MCF 10A (cell line): ENCODE measurements at regions of chr15 and their contacts with region 1.

Region 1: GRCh38 chr15:95025924-95026728 is 794.8 kb downstream of the MCTP2 start:
- DNase-seq: peak; percentile 73
- H3K4me3 Mint-ChIP-seq: no peak overlapping the region
- H3K27ac Mint-ChIP-seq: no peak overlapping the region
- H3K4me1 Mint-ChIP-seq: no peaks in the 10 kb centered on the region
- H3K27me3 Mint-ChIP-seq: no peaks in the 10 kb centered on the region
- CTCF ChIP-seq: peak; percentile 78

Region 2: DNA sequence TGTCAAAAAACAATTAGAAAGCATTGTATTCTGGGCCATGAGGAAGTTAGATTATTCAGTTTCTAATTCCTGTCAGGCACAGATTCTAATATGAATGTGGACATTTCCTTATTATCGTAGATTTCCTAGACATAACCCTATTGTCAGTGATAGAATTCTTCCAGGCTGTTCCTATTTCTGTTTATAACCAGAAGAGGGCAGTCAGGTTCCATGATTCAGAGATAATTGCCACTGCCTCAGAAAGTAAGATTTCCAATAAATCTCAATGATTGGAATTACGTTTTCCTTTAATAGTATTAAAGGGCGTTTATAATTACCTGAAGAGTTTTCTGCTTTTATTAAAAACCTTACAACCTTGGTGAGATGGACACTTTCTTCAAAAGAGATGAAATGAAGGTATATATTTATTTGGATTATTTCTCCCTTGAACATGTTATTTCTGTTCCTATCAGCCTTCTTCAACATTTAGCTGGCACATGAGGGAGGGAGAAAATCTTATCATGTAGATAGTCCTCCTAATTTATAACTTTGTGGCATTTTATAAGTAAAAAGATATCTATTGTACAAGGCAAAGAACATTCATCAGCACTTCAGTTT is 355.6 kb before region 1 on chr15:
- CTCF ChIA-PET with region 1: interaction called, 21 read pairs
- POLR2A ChIA-PET with region 1: interaction called, 5 read pairs
- intact Hi-C with region 1: no loop called
- DNase-seq: peak; percentile 64
- H3K4me3 Mint-ChIP-seq: no peak overlapping the region
- H3K27ac Mint-ChIP-seq: no peak overlapping the region
- H3K4me1 Mint-ChIP-seq: peaks cover 13% of the 10 kb centered on the region
- H3K27me3 Mint-ChIP-seq: no peaks in the 10 kb centered on the region
- CTCF ChIP-seq: peak; percentile 66

Region 3: DNA sequence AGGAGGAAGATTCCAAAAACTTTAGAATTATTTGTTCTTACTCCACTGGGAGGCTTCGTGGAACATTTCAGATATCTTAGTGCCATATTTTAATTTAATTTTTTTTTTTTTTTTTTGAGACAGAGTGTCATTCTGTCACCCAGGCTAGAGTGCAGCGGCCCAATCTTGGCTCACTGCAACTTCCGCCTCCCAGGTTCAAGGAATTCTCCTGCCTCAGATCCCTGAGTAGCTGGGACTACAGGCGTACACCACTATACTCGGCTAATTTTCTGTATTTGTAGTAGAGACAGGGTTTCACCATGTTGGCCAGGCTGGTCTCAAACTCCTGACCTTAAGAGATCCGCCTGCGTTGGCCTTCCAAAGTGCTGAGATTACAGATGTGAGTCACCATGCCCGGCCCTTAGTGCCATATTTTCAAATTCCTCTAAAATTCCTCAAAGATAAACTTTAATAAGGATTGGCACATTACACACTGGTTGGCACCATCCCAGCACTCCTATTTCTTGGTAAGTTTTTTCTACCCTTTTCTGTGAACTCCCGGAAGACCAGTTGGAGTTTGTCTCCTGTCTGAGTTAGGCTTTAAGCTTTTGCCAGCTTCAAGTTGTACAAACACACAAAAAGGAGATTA is 101.0 kb before region 1 on chr15:
- CTCF ChIA-PET with region 1: no interaction called
- POLR2A ChIA-PET with region 1: no interaction called
- intact Hi-C with region 1: no loop called
- DNase-seq: no peak
- H3K4me3 Mint-ChIP-seq: no peak overlapping the region
- H3K27ac Mint-ChIP-seq: no peak overlapping the region
- H3K4me1 Mint-ChIP-seq: no peaks in the 10 kb centered on the region
- H3K27me3 Mint-ChIP-seq: no peaks in the 10 kb centered on the region
- CTCF ChIP-seq: no peak

Region 4: DNA sequence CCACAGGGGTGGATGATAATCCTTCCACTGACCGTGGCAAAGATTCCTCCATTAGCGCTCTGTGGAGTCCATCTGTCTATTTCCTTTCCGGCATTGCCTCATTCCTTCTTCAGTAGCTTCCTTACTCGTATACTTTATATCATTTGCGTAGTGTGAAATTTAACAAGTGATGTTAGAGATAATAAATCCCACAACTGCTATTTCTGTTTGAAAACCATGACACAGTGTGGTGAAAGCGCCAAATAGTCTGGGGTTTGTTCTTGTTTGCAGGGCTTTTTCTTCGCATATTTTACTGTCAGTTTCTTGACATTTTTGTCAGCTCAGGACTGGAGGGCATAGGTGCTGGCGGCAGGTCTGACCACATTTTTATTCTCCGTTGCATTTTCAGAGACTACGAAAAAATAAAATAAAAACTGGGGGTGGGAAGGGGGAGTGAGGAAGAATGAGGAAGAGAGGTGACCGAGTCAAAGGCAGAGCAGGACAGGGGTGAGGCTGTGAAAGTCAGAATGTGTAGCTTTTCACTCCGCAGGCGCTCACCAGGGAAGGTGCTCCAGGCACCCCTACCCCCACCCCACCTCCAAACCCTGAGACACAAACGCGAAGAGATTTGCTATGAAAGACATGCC is 170.2 kb after region 1 on chr15:
- CTCF ChIA-PET with region 1: interaction called, 4 read pairs
- POLR2A ChIA-PET with region 1: no interaction called
- intact Hi-C with region 1: loop called (anchors 5 kb)
- DNase-seq: peak; percentile 17
- H3K4me3 Mint-ChIP-seq: peak overlapping the region; percentile 74
- H3K27ac Mint-ChIP-seq: peak overlapping the region; percentile 84
- H3K4me1 Mint-ChIP-seq: peaks cover 13% of the 10 kb centered on the region
- H3K27me3 Mint-ChIP-seq: no peaks in the 10 kb centered on the region
- CTCF ChIP-seq: no peak

Region 5: DNA sequence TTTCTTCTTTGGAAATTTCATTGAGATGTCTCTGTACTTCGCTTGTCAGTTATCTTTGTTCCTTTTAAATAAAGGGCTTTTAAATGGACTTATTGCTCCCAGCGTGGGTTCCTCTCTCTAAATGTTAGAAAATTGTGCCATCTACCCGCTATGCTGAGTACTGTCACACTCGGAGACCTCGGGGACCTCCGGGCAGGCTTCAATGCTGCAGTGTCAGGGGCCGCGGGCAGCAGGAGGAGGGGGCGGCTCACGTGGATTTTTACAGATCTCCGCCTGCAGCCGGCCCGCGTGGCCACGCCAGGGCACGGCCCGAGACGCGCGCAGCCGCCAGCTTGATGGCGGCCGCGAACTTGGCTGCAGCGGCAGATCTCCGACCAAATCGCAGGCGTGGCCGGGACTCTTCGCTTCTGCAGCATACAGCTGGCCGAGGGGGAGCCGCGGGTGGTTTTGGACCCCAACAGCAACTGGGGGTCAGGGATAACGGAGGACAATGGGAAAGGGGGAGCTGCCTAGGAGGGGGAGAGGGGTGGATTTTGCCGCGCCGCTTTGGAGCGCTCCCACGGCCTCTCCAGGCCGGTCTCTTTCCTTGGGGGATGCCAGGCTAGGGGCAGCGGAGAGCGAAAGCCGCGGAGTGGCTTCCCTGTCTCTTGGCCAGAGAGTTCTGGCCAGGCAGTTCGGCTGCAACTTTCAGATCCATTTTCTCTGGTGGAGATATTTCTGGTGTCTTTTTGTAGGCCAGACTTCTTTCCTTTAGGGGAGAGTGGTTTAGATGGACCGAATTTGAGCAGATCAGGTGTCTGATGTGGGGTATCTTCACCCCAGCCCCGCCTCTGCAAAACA is 1319.7 kb after region 1 on chr15:
- CTCF ChIA-PET with region 1: no interaction called
- POLR2A ChIA-PET with region 1: no interaction called
- intact Hi-C with region 1: loop called (anchors 5 kb)
- DNase-seq: peak; percentile 23
- H3K4me3 Mint-ChIP-seq: no peak overlapping the region
- H3K27ac Mint-ChIP-seq: no peak overlapping the region
- H3K4me1 Mint-ChIP-seq: peaks cover 9% of the 10 kb centered on the region
- H3K27me3 Mint-ChIP-seq: no peaks in the 10 kb centered on the region
- CTCF ChIP-seq: peak; percentile 48

Region 6: DNA sequence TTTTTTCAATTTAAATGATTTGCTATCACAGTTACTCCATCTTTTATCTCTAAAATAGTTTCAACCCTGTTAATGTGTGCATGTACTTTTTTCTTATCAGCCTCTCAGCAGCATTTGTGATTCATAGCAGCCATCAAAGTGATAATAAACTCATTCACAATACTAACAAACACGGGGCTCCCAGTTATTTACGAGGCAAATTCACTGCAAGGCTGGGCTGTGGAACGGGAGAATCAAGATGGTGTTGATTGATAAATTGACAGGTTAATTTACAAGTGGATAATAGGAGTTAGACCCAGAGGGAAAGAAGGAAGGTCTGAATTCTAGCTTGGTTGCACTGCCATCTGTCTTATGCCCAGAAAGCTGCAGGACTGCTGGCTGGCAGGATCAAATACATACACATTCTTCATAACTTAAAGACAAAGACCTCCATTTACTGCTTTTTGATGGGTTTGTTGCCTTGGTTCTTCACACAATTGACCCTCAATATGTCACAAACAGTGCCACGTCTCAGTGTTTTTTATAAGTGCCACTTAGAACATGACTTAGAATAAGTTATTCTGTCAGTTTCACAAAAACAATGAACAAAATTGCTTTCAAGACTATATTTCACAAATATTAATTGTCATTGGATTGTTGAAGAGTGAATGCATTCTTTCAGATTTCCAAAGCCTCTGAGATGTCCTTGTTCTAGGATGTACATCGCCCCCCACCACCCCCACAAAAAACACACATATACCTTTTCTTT is 1867.2 kb after region 1 on chr15:
- CTCF ChIA-PET with region 1: no interaction called
- POLR2A ChIA-PET with region 1: no interaction called
- intact Hi-C with region 1: loop called (anchors 5 kb)
- DNase-seq: peak; percentile 49
- H3K4me3 Mint-ChIP-seq: no peak overlapping the region
- H3K27ac Mint-ChIP-seq: no peak overlapping the region
- H3K4me1 Mint-ChIP-seq: peaks cover 9% of the 10 kb centered on the region
- H3K27me3 Mint-ChIP-seq: no peaks in the 10 kb centered on the region
- CTCF ChIP-seq: peak; percentile 62